Body of pancreas (tissue), 4 donors: ENCODE measurements at regions of chr20 and their contacts with region 1.

Region 1: GRCh38 chr20:29878281-29878741 is 1379.2 kb upstream of the DEFB115 start:
- DNase-seq: peak in 2 of 4 donors; percentile 15 to 44
- ATAC-seq: peak; percentile 37
- H3K4me3 ChIP-seq: no peak overlapping the region
- H3K27ac ChIP-seq: no peak overlapping the region
- H3K4me1 ChIP-seq: no peaks in the 10 kb centered on the region
- H3K27me3 ChIP-seq: no peaks in the 10 kb centered on the region
- CTCF ChIP-seq: no peak
- POLR2A ChIP-seq: no peak

Region 2: GRCh38 chr20:29119141-29119540 is 759.2 kb before region 1 on chr20:
- intact Hi-C with region 1: loop called (anchors 5 kb)
- DNase-seq: no peak
- ATAC-seq: peak; percentile 21
- H3K4me3 ChIP-seq: no peak overlapping the region
- H3K27ac ChIP-seq: no peak overlapping the region
- H3K4me1 ChIP-seq: no peaks in the 10 kb centered on the region
- H3K27me3 ChIP-seq: no peaks in the 10 kb centered on the region
- CTCF ChIP-seq: no peak
- POLR2A ChIP-seq: no peak